ENCODE measurements at regions of chr9 and their contacts with region 1.

Region 1: GRCh38 chr9:137590462-137591383 is at the start of gene ZMYND19:
- DNase-seq: peak; percentile 85 to 94
- H3K4me3 ChIP-seq: peak within 1 kb of the TSS; percentile 92
- H3K4me3 Mint-ChIP-seq: peak within 1 kb of the TSS; percentile 77
- H3K27ac Mint-ChIP-seq: peak within 1 kb of the TSS; percentile 78
- H3K4me1 ChIP-seq: peaks cover 8% of the 10 kb centered on the region
- H3K4me1 Mint-ChIP-seq: no peaks in the 10 kb centered on the region
- H3K27me3 ChIP-seq: no peaks in the 10 kb centered on the region
- H3K27me3 Mint-ChIP-seq: no peaks in the 10 kb centered on the region
- CTCF ChIP-seq: peak in 1 of 2 experiments; percentile 15
- total RNA-seq, gene ZMYND19: 66.3 and 66.9 TPM in 2 replicates

Region 2: GRCh38 chr9:137558127-137558526 is 32.6 kb before region 1 on chr9:
- CTCF ChIA-PET with region 1: no interaction called
- POLR2A ChIA-PET with region 1: no interaction called
- intact Hi-C with region 1: no loop called
- DNase-seq: no peak
- H3K4me3 ChIP-seq: no peak overlapping the region
- H3K4me3 Mint-ChIP-seq: no peak overlapping the region
- H3K27ac Mint-ChIP-seq: no peak overlapping the region
- H3K4me1 ChIP-seq: no peaks in the 10 kb centered on the region
- H3K4me1 Mint-ChIP-seq: peaks cover 16% of the 10 kb centered on the region
- H3K27me3 ChIP-seq: no peaks in the 10 kb centered on the region
- H3K27me3 Mint-ChIP-seq: no peaks in the 10 kb centered on the region
- CTCF ChIP-seq: no peak

Region 3: GRCh38 chr9:137605121-137606004 is 14.6 kb after region 1 on chr9 and contains the start of gene ARRDC1:
- CTCF ChIA-PET with region 1: interaction called, 3 read pairs
- POLR2A ChIA-PET with region 1: interaction called, 22 read pairs
- intact Hi-C with region 1: loop called (anchors 2 kb)
- DNase-seq: peak; percentile 95 to 98
- H3K4me3 ChIP-seq: peak within 1 kb of the TSS; percentile 85
- H3K4me3 Mint-ChIP-seq: peak within 1 kb of the TSS; percentile 76
- H3K27ac Mint-ChIP-seq: peak within 1 kb of the TSS; percentile 84
- H3K4me1 ChIP-seq: peaks cover 16% of the 10 kb centered on the region
- H3K4me1 Mint-ChIP-seq: peaks cover 14% of the 10 kb centered on the region
- H3K27me3 ChIP-seq: no peaks in the 10 kb centered on the region
- H3K27me3 Mint-ChIP-seq: no peaks in the 10 kb centered on the region
- CTCF ChIP-seq: no peak
- total RNA-seq, gene ARRDC1: 61.1 and 66.6 TPM in 2 replicates

Region 4: DNA sequence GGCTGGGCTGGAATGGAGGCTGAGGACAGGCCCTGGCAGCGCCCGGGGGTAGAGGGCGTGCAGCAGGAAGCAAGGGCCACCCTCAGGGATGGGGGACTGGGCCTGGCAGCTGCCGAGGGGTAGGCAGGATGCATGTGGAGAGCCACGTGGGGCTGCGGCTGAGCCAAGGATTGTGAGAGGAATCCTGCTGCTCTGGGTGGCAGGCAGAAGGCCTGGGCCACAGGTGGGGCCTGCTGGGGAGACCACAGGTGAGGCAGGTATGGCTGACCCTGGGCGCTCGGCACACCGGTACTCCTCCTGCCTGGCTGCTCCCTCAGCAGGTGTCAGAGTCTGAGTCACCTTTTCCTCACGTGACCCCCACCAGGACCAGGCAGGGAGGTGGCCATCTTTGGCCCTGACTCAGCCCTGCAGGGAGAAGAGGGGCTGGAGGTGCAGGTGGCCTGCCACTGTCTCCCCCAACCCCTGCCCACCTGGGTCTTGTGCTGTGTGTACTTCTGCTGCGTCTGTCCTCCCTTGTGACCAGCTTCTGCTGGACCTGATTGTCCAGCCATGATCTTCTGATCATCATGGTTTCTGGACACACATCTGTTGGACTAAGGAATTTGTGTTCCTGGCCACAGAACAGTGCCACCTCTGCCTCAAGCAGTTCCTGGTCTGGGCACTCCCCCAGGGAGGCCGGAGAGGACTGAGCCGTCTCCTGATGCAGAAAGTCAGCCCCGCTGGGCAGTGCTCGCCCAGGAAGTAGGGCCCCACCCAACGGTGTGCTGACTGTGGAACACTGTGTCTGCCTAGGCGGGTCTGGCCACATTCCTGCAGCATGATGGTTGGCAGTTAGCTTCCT is 21.1 kb after region 1 on chr9:
- CTCF ChIA-PET with region 1: no interaction called
- POLR2A ChIA-PET with region 1: no interaction called
- intact Hi-C with region 1: loop called (anchors 2 kb)
- DNase-seq: peak; percentile 92 to 95
- H3K4me3 ChIP-seq: 0 out of 2 replicates have a peak overlapping the region, but pooled peaks have one; percentile 1
- H3K4me3 Mint-ChIP-seq: peak overlapping the region; percentile 59
- H3K27ac Mint-ChIP-seq: peak overlapping the region; percentile 98
- H3K4me1 ChIP-seq: peaks cover 40% of the 10 kb centered on the region
- H3K4me1 Mint-ChIP-seq: peaks cover 19% of the 10 kb centered on the region
- H3K27me3 ChIP-seq: no peaks in the 10 kb centered on the region
- H3K27me3 Mint-ChIP-seq: no peaks in the 10 kb centered on the region
- CTCF ChIP-seq: no peak

Measured in Caco-2 (cell line).